ENCODE measurements at regions of chr4 and their contacts with region 1.

Region 1: DNA sequence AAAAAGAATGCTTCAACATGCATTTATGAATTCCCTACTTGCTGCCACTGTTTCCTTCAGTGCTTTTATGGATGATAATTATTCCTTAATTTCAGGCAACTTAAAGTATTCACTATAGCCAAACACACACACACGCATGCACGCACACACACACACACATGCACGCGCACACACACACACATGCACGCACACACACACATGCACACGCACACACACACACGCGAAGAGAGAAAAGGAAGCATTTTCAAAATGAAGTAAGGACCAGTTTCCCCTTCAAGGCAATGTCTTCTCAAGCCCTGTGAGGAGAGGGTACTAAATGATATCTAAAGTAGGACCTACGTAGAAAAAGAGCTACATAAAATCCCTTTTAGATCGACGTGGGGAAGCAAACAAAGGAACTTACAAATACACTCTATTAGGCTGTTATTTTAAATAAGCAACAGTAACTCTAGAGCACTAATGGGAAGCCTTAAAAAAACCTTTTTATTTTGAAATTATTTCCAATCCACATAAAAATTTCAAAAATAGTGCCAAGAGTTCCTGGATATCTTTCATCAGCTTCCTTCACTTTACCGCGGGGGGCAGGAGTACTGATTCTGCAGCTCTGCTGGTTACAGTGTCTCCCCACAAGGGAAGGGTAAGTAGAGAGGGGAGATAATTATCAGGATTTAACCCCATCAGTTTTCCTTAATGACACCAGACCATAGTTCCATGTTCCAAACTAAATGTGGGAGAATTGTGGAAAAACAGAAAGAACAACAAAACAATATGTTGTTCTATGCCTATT is 13.7 kb downstream of the IRF2 start:
- DNase-seq: no peak
- H3K4me3 ChIP-seq: no peak overlapping the region
- H3K27ac ChIP-seq: no peak overlapping the region
- H3K4me1 ChIP-seq: peaks cover 39 to 58% (median 41%) of the 10 kb centered on the region in 4 donors
- H3K27me3 ChIP-seq: no peaks in the 10 kb centered on the region
- CTCF ChIP-seq: no peak
- EP300 ChIP-seq: no peak
- POLR2A ChIP-seq: no peak

Region 2: DNA sequence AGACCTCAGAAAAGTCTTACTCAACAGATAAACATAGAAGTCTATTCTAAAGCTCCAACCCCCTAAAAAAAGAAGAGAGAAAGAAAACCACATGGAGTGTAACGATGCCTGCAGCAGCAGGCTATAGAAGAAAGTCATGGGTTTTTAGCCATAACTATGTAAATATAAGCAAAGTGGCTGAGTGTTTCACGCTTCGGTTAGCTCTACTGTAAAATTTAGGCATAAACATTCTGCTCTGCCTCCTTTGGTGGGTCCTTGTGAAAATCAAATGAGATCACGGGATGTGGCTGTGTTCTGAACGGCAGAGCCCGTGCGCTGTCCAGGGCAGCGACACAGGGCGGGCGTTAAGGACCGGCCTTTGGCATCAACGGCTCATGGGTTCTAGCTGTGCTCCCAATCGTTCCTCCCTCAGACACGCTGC is 64.7 kb before region 1 on chr4:
- intact Hi-C with region 1: loop called (anchors 10 kb)
- DNase-seq: no peak
- H3K4me3 ChIP-seq: no peak overlapping the region
- H3K27ac ChIP-seq: peak overlapping the region; percentile 16 to 65 (median 56)
- H3K4me1 ChIP-seq: peaks cover 23 to 38% (median 32%) of the 10 kb centered on the region in 4 donors
- H3K27me3 ChIP-seq: no peaks in the 10 kb centered on the region
- CTCF ChIP-seq: no peak
- EP300 ChIP-seq: no peak
- POLR2A ChIP-seq: no peak

Region 3: GRCh38 chr4:184424993-184425758 is 35.5 kb before region 1 on chr4:
- intact Hi-C with region 1: no loop called
- DNase-seq: no peak
- H3K4me3 ChIP-seq: no peak overlapping the region
- H3K27ac ChIP-seq: peak overlapping the region in 3 of 4 donors; percentile 8 to 51 (median 31)
- H3K4me1 ChIP-seq: peaks cover 29 to 52% (median 41%) of the 10 kb centered on the region in 4 donors
- H3K27me3 ChIP-seq: no peaks in the 10 kb centered on the region
- CTCF ChIP-seq: no peak
- EP300 ChIP-seq: no peak
- POLR2A ChIP-seq: no peak